ENCODE measurements at regions of chr7 and their contacts with region 1.

Region 1: DNA sequence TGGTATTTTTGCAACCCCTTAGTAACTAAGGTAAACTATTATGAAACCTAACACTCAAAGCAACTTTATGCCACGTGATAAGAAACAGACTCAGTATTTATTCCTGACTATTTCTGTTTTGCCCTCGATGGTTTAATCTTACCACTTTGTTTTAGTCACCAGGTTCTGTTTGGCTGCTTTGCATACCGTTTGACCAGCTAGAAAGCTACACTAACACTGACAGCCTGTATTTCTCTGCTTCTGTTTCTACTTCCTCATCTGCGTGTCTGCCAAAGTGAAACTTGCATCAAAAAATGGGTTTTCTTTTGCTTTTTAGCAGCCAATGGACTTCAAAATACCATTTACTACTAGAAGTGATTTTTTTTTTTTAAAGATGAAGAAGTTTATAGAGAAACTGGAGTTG is 802.5 kb downstream of the GRM8 start:
- DNase-seq: peak; percentile 75
- ATAC-seq: peak; percentile 96
- H3K4me3 ChIP-seq: peak overlapping the region; percentile 23; the same call in 1 of the 2 replicates
- H3K27ac ChIP-seq: peak overlapping the region; percentile 89
- H3K4me1 ChIP-seq: peaks cover 28% of the 10 kb centered on the region
- H3K27me3 ChIP-seq: no peaks in the 10 kb centered on the region
- CTCF ChIP-seq: no peak
- EP300 ChIP-seq: peak in 1 of 2 experiments; percentile 72; a peak in 2 of 4 replicates
- POLR2A ChIP-seq: no peak
- RAD21 ChIP-seq: no peak

Region 2: GRCh38 chr7:125828153-125828700 is 622.0 kb before region 1 on chr7:
- CTCF ChIA-PET with region 1: no interaction called
- POLR2A ChIA-PET with region 1: no interaction called
- RAD21 ChIA-PET with region 1: no interaction called
- SMC1A ChIA-PET with region 1: no interaction called
- in situ Hi-C with region 1: no loop called
- intact Hi-C with region 1: no loop called
- DNase-seq: no peak
- ATAC-seq: no peak
- H3K4me3 ChIP-seq: no peak overlapping the region
- H3K27ac ChIP-seq: no peak overlapping the region
- H3K4me1 ChIP-seq: no peaks in the 10 kb centered on the region
- H3K27me3 ChIP-seq: no peaks in the 10 kb centered on the region
- CTCF ChIP-seq: no peak
- EP300 ChIP-seq: no peak
- POLR2A ChIP-seq: no peak
- RAD21 ChIP-seq: no peak

Region 3: DNA sequence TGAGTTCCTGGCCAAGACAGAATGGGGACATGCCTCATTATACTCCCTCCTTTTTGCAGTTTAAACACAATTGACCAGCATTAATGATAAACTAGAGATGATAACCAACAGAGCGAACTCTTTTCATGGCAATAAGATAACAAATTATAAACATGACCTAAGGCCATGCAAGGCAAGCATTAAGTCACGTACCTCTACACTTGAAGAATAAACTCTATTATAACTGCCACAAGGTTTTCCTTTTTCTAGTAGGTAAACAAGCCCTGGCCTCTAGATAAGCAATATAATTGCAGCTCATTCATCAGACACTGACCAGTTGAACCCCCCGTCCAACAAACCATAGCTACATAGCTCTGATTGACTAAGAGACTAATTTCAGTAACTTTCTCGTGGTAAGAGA is 35.5 kb after region 1 on chr7:
- CTCF ChIA-PET with region 1: no interaction called
- POLR2A ChIA-PET with region 1: no interaction called
- RAD21 ChIA-PET with region 1: no interaction called
- SMC1A ChIA-PET with region 1: no interaction called
- in situ Hi-C with region 1: no loop called
- intact Hi-C with region 1: no loop called
- DNase-seq: no peak
- ATAC-seq: no peak
- H3K4me3 ChIP-seq: no peak overlapping the region
- H3K27ac ChIP-seq: no peak overlapping the region
- H3K4me1 ChIP-seq: no peaks in the 10 kb centered on the region
- H3K27me3 ChIP-seq: no peaks in the 10 kb centered on the region
- CTCF ChIP-seq: no peak
- EP300 ChIP-seq: no peak
- POLR2A ChIP-seq: no peak
- RAD21 ChIP-seq: no peak

Region 4: DNA sequence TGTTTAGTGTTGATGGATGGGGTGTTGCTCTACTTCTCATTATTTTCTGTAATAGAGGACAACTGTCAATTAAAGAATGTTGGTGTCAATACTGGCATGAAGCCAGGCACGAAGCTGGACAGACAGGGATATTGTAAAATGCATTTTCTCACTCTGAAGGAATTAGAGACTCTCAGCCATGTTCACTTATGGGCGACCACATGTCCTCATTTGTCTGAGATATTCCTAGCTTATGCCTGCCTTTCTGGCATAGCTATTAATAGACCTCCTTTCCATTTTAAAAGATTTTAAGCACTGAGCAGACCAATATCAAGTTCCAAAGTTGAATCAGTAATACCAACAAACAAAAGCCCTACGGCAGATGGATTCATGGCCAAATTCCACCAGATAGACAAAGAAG is 212.6 kb after region 1 on chr7:
- CTCF ChIA-PET with region 1: no interaction called
- POLR2A ChIA-PET with region 1: interaction called, 10 read pairs
- RAD21 ChIA-PET with region 1: interaction called, 35 read pairs
- SMC1A ChIA-PET with region 1: interaction called, 30 read pairs
- in situ Hi-C with region 1: no loop called
- intact Hi-C with region 1: loop called (anchors 2 kb)
- DNase-seq: no peak
- ATAC-seq: no peak
- H3K4me3 ChIP-seq: no peak overlapping the region
- H3K27ac ChIP-seq: no peak overlapping the region
- H3K4me1 ChIP-seq: peaks cover 20% of the 10 kb centered on the region
- H3K27me3 ChIP-seq: no peaks in the 10 kb centered on the region
- CTCF ChIP-seq: no peak
- EP300 ChIP-seq: no peak
- POLR2A ChIP-seq: no peak
- RAD21 ChIP-seq: no peak

Region 5: GRCh38 chr7:126720232-126720631 is 270.0 kb after region 1 on chr7:
- CTCF ChIA-PET with region 1: interaction called, 3 read pairs
- POLR2A ChIA-PET with region 1: no interaction called
- RAD21 ChIA-PET with region 1: interaction called, 11 read pairs
- SMC1A ChIA-PET with region 1: interaction called, 18 read pairs
- in situ Hi-C with region 1: no loop called
- intact Hi-C with region 1: no loop called
- DNase-seq: no peak
- ATAC-seq: peak; percentile 91
- H3K4me3 ChIP-seq: no peak overlapping the region
- H3K27ac ChIP-seq: peak overlapping the region; percentile 46; the same call in 1 of the 2 replicates
- H3K4me1 ChIP-seq: peaks cover 11% of the 10 kb centered on the region
- H3K27me3 ChIP-seq: no peaks in the 10 kb centered on the region
- CTCF ChIP-seq: no peak
- EP300 ChIP-seq: peak; percentile 29 to 54; a peak in 2 of 4 replicates
- POLR2A ChIP-seq: no peak
- RAD21 ChIP-seq: no peak